Activated CD4-positive, alpha-beta T cell treated with anti-CD3 and anti-CD28 coated beads, Interleukin-2, amount 10 ng/mL, durations not matched to agents 24 days and 14 days (primary cell): ENCODE measurements at regions of chr12 and their contacts with region 1.

Region 1: GRCh38 chr12:10235761-10236631 is 23.3 kb downstream of the GABARAPL1 start:
- DNase-seq: peak; percentile 77
- H3K4me3 Mint-ChIP-seq: no peak overlapping the region
- H3K27ac Mint-ChIP-seq: no peak overlapping the region
- H3K4me1 Mint-ChIP-seq: no peaks in the 10 kb centered on the region
- H3K27me3 Mint-ChIP-seq: peaks cover 20% of the 10 kb centered on the region

Region 2: GRCh38 chr12:10501031-10501430 is 265.0 kb after region 1 on chr12:
- intact Hi-C with region 1: loop called (anchors 5 kb)
- DNase-seq: no peak
- H3K4me3 Mint-ChIP-seq: no peak overlapping the region
- H3K27ac Mint-ChIP-seq: no peak overlapping the region
- H3K4me1 Mint-ChIP-seq: peaks cover 3% of the 10 kb centered on the region
- H3K27me3 Mint-ChIP-seq: peaks cover 19% of the 10 kb centered on the region

Region 3: DNA sequence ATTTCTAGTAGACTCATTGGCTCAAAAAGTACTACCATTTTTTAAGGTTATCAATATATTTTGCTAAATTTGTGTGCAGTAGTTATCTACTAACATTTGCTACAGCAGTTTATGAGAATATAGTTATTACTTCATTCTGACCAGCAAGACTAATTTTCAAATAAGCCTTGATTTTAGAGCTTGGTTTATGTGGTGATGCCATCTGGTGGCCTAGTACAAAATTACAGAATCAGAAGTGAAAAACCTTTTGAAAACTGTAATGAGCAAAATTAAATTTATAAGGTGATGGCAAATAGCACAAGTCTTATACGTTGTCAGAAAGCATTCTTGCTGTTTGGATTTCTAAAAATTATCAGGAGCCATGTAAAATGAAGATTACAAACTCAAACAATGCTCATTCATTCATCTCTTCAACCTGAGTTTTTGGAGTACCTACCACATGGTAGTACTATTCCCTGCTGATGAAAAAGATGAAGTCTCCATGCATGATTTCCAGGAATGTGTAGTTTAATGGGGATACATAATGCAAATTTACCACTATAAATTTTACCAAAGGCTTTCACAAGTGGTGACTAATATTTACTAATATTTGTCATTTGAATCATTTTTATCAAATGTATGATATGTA is 326.4 kb after region 1 on chr12:
- intact Hi-C with region 1: loop called (anchors 1 kb)
- DNase-seq: peak; percentile 74
- H3K4me3 Mint-ChIP-seq: no peak overlapping the region
- H3K27ac Mint-ChIP-seq: no peak overlapping the region
- H3K4me1 Mint-ChIP-seq: no peaks in the 10 kb centered on the region
- H3K27me3 Mint-ChIP-seq: peaks cover 32% of the 10 kb centered on the region

Region 4: GRCh38 chr12:10673660-10674384 is 437.8 kb after region 1 on chr12 and contains the start of gene STYK1:
- intact Hi-C with region 1: loop called (anchors 5 kb)
- DNase-seq: peak; percentile 91
- H3K4me3 Mint-ChIP-seq: peak within 1 kb of the TSS; percentile 78
- H3K27ac Mint-ChIP-seq: peak within 1 kb of the TSS; percentile 38
- H3K4me1 Mint-ChIP-seq: peaks cover 38% of the 10 kb centered on the region
- H3K27me3 Mint-ChIP-seq: peaks cover 58% of the 10 kb centered on the region
- total RNA-seq, gene STYK1: not detected in 2 replicates

Region 5: DNA sequence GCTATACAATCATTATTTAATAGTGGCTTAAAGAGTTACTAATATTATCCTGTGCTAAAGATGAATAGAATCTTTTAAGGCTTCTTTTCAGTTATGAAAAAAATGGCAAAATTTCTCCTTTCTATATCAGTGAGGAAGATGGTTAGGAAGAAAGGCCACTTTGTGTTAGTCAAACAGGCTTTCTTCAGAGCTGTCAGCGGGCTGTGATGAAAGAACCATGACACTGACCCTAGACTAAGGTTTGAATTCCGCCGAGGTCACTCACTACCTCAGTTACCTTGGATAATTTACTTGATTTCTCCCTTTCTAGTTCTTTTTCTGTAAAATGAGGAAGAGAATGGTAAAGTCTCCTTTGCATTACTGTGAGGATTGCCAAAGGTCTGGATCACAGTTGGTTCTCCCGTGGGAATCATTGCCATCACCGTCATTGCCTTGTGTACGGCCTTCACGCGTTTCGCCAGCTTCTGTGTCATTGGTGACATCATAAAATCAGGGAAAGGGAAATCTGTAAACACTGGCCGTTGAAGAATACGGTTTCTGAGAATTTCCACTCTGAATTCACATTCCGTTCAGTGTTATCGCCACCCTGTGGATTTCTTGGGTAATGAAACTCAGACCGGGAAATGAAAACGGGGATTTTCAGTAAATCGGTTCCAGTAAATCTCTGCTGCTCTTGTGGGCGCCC is 513.8 kb after region 1 on chr12:
- intact Hi-C with region 1: loop called (anchors 1 kb)
- DNase-seq: peak; percentile 93
- H3K4me3 Mint-ChIP-seq: peak overlapping the region; percentile 66
- H3K27ac Mint-ChIP-seq: no peak overlapping the region
- H3K4me1 Mint-ChIP-seq: peaks cover 17% of the 10 kb centered on the region
- H3K27me3 Mint-ChIP-seq: peaks cover 36% of the 10 kb centered on the region

Region 6: DNA sequence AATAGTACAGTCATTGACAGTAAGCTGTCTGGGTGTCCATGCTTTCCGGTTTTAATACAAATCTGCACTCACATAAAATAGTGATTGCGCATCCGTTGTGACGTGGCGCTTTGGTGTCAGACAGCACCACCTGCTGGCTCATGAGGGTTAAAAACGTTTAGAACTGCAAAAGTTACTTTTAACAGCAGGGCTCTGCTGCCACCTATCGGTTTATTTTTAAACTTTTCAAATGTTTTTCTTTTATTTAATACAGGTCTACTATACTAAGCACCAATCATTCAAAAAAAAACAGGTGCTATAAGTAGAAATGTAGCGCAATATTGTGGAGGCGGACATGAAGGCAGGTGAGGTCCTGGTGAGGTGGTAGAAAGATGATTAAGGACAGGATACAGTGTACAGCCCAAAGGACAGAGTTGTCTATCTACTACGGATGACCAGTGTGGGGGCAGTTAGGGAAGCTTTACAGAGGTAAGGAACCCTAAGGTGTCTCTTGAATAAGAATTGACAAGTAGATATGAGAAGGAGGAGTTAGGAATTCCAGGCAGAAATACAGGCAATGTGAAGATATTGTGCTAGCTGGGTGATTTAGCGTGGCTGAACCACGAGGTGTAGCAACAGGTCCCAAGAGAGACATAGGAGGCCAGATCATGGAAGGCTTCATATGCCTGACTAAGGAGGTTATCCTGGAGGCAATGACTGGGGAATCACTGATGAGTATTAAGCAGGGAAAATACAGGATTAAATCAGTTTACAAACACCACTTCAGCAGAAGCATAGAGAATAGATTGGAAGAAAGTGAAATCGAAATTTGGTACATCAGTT is 1250.8 kb after region 1 on chr12:
- intact Hi-C with region 1: loop called (anchors 10 kb)
- DNase-seq: peak; percentile 93
- H3K4me3 Mint-ChIP-seq: no peak overlapping the region
- H3K27ac Mint-ChIP-seq: no peak overlapping the region
- H3K4me1 Mint-ChIP-seq: peaks cover 6% of the 10 kb centered on the region
- H3K27me3 Mint-ChIP-seq: peaks cover 14% of the 10 kb centered on the region